Mammary epithelial cell (primary cell): ENCODE measurements at regions of chr12 and their contacts with region 1.

Region 1: DNA sequence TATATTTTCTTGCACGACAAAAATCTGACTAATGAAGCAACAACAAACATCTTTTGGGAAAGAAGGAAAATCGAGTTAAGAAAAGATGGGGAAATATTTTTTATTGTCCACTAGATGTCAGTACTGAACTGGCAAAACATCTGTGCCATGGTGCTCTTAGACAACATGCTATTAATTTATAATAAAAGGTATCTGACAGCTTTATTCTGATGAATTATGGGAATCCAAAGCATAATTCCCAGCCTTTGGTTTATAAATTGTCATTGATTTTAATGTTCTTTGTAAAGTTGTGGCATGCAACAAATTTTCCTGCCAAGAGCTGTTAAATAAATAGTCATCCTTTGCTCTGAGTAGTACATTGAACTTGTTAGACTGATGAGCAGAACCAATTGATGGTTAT is 231.2 kb downstream of the ETNK1 start:
- DNase-seq: peak; percentile 13
- H3K4me3 ChIP-seq: no peak overlapping the region
- H3K27ac ChIP-seq: no peak overlapping the region
- H3K4me1 ChIP-seq: no peaks in the 10 kb centered on the region
- H3K27me3 ChIP-seq: no peaks in the 10 kb centered on the region
- CTCF ChIP-seq: peak; percentile 42 to 62

Region 2: GRCh38 chr12:22981711-22982110 is 125.5 kb after region 1 on chr12:
- CTCF ChIA-PET with region 1: no interaction called
- dilution Hi-C with region 1: no loop called
- in situ Hi-C with region 1: no loop called
- intact Hi-C with region 1: loop called (anchors 1 kb)
- DNase-seq: peak; percentile 15
- H3K4me3 ChIP-seq: no peak overlapping the region
- H3K27ac ChIP-seq: no peak overlapping the region
- H3K4me1 ChIP-seq: peaks cover 22% of the 10 kb centered on the region
- H3K27me3 ChIP-seq: no peaks in the 10 kb centered on the region
- CTCF ChIP-seq: peak; percentile 29 to 47

Region 3: DNA sequence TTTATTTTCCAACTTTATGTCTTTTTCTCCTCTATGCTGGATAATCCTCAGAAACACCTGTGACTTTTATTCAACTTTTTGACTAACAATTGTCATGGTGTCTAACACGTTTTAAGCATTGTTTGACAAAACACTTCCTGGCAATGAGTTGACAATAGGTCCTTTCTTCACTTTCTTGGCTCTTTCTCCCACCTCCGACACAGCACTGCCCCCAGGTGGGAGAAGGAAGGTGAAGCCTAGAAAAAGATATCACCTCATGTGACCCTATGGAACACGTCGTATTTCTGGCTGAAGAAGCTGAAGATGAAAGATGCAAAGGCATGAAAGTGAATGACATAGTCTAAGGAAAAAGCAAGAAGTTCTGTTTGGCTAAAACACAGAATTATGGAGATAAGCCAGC is 198.8 kb after region 1 on chr12:
- CTCF ChIA-PET with region 1: interaction called, 3 read pairs
- dilution Hi-C with region 1: no loop called
- in situ Hi-C with region 1: loop called in 1 of 2 experiments (anchors 5 kb)
- intact Hi-C with region 1: loop called (anchors 1 kb)
- DNase-seq: peak; percentile 54
- H3K4me3 ChIP-seq: no peak overlapping the region
- H3K27ac ChIP-seq: no peak overlapping the region
- H3K4me1 ChIP-seq: no peaks in the 10 kb centered on the region
- H3K27me3 ChIP-seq: no peaks in the 10 kb centered on the region
- CTCF ChIP-seq: peak; percentile 75

Region 4: DNA sequence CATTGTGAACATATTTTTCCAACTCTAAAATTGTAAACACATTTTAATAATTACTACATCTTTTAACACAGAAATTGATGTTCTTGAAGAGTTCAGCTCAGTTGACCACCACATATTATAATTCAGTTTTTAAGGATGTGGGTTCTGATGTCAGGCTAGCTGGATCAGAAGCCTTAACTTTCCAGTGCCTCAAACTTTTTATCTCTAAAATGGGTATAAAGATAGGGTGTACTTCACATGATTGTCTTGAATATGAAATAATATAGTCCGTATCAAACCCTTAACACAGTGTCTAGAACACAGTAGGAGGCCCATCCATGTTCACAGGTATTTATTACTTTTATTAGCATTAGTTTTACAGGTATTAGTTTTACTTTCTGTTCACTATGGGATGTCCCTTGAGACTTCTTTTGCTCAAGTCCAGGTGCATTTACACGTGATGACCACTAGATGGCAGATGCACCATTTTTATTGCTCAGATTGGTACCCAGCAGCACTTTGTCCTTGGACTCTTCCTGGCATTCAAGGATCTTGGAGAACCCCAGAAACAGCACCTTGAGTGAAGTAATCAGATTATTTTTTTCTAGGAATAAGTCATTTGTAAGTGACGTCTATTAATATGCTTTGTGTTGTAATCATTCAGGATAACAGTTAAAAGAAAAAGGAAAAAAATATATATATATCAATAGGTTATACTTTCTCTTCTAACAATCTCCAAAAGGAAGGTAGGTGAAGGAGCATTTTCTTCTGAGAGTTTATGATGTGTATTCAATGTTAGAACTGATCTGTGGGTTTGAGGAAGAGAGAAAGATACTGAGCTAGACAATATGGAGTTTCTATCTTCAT is 349.0 kb after region 1 on chr12:
- CTCF ChIA-PET with region 1: no interaction called
- dilution Hi-C with region 1: no loop called
- in situ Hi-C with region 1: no loop called
- intact Hi-C with region 1: loop called (anchors 1 kb)
- DNase-seq: peak; percentile 37
- H3K4me3 ChIP-seq: no peak overlapping the region
- H3K27ac ChIP-seq: no peak overlapping the region
- H3K4me1 ChIP-seq: no peaks in the 10 kb centered on the region
- H3K27me3 ChIP-seq: no peaks in the 10 kb centered on the region
- CTCF ChIP-seq: peak; percentile 84 to 94

Region 5: GRCh38 chr12:23221066-23221465 is 364.9 kb after region 1 on chr12:
- CTCF ChIA-PET with region 1: no interaction called
- dilution Hi-C with region 1: no loop called
- in situ Hi-C with region 1: no loop called
- intact Hi-C with region 1: loop called (anchors 1 kb)
- DNase-seq: peak; percentile 5
- H3K4me3 ChIP-seq: no peak overlapping the region
- H3K27ac ChIP-seq: no peak overlapping the region
- H3K4me1 ChIP-seq: no peaks in the 10 kb centered on the region
- H3K27me3 ChIP-seq: no peaks in the 10 kb centered on the region
- CTCF ChIP-seq: peak; percentile 30 to 62